Right ventricle myocardium superior (tissue), 1 donor: ENCODE measurements at regions of chr2 and their contacts with region 1.

Region 1: DNA sequence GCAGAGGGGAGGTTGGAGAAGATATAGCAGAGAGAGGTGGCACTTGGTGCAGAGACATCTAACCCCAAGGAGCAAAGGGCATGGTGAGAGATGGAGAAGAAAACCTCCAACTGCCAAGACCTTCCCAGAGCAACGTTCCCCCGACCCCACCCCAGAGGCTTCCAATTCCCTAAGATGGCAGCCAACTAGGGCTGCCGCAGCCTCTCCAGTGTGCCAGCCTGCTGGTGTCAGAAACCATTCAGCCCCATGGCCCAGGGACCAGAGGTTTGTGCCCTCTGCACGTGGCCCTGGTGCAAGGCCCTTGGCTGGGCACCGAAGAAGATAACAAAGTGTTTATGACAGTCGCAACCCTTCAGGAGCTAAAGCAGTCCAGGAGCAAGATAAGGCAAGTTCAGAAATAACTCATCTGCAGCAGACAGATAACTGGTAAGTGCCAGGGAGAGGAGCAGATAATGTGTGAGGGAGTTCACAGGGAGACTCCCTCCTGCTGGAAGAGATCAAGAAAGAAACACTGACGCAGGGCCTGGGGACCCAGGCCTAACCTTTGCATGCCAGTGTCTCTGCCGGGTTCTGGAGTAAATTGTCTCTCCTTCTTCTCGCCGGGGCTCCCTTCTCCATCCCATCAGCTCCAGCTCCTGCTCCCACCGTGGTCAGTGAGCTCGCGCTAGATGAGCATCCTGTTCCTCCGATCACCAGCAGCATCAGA is 66.1 kb upstream of the ID2 start:
- DNase-seq: no peak
- ATAC-seq: peak; percentile 89

Region 2: DNA sequence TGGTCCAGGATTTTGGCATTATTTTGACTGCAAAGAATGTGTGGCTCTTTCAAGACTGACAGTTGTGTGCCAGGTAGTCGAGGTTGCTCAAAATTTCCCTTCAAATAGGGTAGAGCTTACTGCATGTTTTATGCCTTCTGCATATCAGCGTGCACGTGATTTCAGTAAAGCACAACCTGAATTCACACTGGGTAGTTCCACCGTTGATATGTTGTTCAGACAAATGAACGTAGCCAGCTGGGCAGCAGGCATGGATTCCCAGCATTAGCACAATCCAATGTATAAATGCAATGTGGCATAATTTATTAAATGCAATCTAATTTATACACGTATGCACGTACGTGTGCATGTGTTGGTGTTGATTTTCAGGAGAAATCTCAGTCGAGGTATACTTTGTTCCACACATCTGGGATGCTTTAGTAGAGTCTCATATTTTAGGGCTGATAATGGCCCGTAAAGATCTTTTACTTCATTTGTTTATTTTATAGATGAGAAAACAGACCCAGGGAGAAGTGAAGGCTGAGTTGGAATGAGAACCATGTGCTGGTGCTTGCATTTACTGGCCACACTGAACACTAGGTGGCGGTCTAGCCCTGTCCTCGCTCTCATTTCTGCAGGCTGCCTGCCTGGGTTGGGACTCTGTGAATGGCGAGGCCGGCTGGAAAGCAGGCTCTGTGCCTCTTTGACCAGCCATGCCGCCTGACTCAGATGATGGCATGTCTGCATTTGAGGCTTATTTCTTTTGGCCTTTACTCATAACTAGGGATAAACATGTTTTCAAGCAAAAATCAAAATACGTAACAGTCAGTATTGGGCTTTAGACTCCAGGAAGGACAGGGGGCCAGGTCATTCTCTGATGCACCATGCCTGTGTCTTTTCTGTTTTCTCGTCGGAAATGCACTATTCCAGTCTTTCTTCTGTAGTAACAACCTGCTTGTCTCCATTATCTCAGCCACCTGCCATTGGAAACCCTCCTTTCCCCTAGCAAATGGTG is 1578.1 kb before region 1 on chr2:
- intact Hi-C with region 1: no loop called
- DNase-seq: peak; percentile 74
- ATAC-seq: peak; percentile 66

Region 3: DNA sequence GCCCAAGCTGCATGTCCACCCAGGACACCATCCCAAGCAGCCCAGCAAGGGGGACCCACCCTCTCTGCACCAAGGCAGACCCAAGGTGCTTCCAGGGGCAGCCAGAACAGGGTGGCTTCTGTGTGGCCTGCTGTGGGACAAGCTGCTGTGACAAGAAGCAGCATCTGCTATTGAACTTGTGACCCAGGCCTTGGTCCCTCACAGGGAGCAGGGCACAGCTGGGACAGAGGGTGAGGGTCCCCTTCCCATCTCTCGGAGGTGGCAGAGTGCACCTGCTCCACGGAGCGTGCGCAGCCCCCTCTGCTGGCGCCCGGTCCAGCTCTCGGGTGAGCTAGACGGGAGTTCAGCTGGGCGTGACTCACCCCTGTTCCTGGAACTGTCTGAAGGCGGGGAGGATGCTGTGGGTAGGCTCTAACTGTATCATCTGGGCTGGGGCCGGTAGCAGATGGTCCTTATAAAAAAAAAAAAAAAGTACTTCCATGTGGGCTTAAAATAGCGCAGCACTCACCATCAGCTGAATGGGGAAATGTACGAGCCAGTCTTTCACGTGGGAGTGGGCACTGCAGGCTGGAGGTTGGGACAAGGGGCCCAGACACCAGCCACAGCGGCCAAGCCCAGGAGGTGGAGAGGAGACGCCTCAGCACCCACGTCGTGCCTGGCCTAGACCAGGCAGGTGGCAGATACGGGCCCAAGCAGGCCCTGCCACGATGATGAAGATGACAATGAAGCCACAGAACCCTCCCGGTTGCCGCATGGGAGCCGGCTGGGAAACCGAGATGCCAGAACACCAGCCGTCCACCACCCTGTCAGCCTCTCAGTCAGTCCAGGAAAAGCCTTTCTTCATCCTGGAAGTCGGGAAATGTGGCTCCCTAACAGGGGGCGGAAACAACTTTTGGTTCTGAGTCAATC is 70.7 kb before region 1 on chr2:
- intact Hi-C with region 1: loop called (anchors 10 kb)
- DNase-seq: peak; percentile 81
- ATAC-seq: peak; percentile 75

Region 4: DNA sequence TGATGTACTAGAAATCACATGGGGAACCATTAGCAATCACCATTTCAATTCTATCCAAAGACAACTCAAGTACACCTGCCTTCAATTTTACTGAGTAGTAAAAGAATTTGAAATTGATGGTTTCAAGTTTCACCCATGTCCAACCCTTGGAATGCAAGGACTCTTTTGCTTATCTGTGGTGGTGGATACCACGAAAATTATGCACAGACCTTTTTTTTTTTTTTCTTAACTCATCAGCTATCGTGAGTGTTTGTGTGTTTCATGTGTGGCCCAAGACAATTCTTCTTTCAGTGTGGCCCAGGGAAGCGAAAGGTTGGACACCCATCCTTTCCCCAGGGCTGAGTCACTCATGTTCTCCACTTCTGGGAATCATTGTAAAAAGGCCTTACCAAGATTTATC is 89.2 kb after region 1 on chr2:
- intact Hi-C with region 1: no loop called
- DNase-seq: no peak
- ATAC-seq: no peak

Region 5: GRCh38 chr2:8761529-8762164 is 145.9 kb after region 1 on chr2:
- intact Hi-C with region 1: no loop called
- DNase-seq: no peak
- ATAC-seq: no peak